ENCODE measurements at regions of chr6 and their contacts with region 1.

Region 1: DNA sequence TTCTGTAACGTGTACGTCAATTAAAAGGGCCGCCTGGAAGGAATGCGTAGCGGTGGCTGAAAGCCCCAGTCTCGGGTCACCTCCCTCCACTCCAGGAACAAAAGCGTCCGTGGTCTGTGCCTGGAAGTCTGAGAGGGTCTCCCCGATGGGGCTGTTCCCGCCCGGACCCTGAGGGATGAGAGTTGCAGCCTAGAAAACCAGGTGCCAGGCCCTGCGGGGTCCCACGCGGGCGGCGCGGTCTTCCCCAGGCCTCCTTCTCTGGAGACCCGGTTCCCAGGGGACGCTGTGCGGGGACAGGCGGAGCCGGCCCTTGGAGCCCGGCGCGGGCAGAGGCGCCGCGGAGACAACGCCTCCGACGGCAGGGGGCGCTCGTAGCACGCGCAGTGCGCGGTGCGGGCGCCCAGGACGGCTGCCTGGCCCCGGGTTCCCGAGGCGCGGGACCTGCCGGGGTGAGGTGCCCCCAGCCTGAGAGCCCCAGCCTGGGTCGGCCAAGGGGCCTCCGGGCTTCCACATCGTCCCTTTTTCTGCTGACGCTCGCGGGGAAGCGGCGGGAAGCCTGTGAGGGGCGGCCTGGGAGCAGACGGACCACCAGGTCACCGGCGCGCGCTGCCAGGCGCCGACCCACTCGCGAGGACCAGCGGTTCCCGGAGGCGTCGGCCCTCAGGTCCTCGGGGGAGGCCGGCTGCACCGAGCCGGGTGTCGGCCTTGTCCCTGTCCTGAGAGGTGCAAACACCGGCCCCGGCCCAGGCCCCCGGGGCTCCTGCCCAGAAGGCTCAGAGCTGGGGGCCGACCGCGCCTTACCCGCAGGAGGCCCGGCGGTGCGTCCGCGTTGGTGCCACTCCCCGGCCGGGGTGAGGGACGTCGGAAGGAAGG is 5.3 kb upstream of the FOXC1 start:
- DNase-seq: peak; percentile 73

Region 2: GRCh38 chr6:1624851-1625781 is 20.7 kb after region 1 on chr6:
- CTCF ChIA-PET with region 1: interaction called, 4 read pairs
- POLR2A ChIA-PET with region 1: interaction called, 144 read pairs
- DNase-seq: no peak

Region 3: GRCh38 chr6:1695546-1696462 is 91.4 kb after region 1 on chr6:
- CTCF ChIA-PET with region 1: no interaction called
- POLR2A ChIA-PET with region 1: interaction called, 39 read pairs
- DNase-seq: no peak

Region 4: GRCh38 chr6:1802491-1803395 is 198.3 kb after region 1 on chr6:
- CTCF ChIA-PET with region 1: no interaction called
- POLR2A ChIA-PET with region 1: interaction called, 30 read pairs
- DNase-seq: peak; percentile 64

Measured in HEK293T (cell line).